ENCODE measurements at regions of chr6 and their contacts with region 1.

Region 1: DNA sequence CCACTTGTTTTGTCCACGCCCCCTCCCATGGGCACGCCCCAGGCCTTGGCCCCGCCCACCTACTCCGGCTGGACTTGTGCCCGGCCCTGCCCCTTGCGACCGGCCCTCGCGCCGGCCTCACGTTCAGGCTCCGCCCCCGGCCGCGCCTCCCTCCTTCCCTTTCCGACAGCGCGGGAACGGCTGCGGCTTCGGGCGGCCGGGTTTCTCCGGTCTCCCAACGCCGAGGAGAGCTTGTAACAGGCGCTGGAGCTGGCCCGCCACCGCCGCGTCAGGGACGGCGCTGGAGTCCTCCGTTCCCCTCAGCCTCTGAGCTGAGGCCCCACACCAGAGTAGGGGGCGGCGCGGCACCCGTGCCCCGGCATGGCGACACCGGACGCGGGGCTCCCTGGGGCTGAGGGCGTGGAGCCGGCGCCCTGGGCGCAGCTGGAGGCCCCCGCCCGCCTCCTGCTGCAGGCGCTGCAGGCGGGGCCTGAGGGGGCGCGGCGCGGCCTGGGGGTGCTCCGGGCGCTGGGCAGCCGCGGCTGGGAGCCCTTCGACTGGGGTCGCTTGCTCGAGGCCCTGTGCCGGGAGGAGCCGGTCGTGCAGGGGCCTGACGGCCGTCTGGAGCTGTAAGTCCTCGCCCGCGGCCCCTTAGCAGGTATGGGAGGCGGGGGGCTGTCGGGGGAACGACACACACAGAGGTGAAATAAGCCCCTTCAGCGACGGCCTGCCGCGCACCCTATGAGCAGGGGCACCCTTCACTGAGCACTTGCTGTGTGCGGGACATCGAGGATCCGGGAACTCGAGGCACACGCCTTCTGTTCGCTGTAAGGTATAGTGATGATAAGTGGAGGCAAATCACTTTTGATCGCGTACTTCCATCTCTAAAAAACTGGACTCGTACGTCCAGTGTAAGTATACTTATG is at the start of gene FANCE:
- DNase-seq: peak; percentile 95
- ATAC-seq: peak; percentile 79
- H3K4me3 ChIP-seq: peak within 1 kb of the TSS; percentile 79
- H3K27ac ChIP-seq: no peak within 1 kb of the TSS
- H3K4me1 ChIP-seq: peaks cover 19% of the 10 kb centered on the region
- H3K27me3 ChIP-seq: no peaks in the 10 kb centered on the region
- CTCF ChIP-seq: no peak
- total RNA-seq, gene FANCE: 13.8 and 18.6 TPM in 2 replicates

Region 2: DNA sequence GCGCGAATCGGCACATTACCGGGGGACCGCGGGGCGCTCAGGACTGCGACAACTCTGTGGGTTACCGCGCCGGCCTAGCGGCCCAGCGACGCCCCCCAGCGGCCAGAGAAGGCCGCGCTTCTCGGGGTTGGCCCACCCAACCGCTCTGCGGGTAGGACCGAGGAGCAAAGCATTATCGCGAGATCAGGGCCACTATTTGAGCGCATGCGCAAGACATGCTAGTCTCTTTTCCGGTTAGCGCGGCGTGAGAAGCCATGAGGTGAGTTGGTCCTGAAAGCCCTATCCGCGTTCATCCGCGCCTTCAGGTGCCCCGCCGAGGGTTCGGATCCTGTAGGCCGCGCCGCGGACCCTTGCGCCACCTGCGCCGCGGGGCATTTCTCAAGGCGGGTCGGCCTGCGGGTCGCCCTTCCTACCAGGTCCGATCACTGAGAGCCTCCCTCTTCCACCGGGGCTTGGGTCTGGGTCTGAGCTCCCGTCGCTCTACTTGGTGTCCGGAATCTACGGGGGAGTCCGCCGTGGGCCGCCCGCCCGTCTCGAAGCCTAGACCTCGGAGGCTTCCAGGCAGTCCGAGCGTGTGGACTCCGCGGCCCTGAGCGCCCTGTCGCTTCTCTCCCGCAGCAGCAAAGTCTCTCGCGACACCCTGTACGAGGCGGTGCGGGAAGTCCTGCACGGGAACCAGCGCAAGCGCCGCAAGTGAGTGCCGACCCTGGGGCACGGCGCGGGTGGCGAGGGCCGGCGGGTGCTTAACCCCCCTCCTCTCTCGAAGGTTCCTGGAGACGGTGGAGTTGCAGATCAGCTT is 15.9 kb after region 1 on chr6 and contains the start of gene RPL10A:
- CTCF ChIA-PET with region 1: interaction called, 5 read pairs
- POLR2A ChIA-PET with region 1: interaction called, 4 read pairs
- intact Hi-C with region 1: loop called (anchors 2 kb)
- DNase-seq: peak; percentile 98
- ATAC-seq: peak; percentile 85
- H3K4me3 ChIP-seq: peak within 1 kb of the TSS; percentile 82
- H3K27ac ChIP-seq: peak within 1 kb of the TSS; percentile 81
- H3K4me1 ChIP-seq: peaks cover 27% of the 10 kb centered on the region
- H3K27me3 ChIP-seq: no peaks in the 10 kb centered on the region
- CTCF ChIP-seq: peak; percentile 96
- total RNA-seq, gene RPL10A: 1,114 and 1,509 TPM in 2 replicates

Region 3: GRCh38 chr6:35494161-35494619 is 41.8 kb after region 1 on chr6:
- CTCF ChIA-PET with region 1: no interaction called
- POLR2A ChIA-PET with region 1: no interaction called
- intact Hi-C with region 1: no loop called
- DNase-seq: no peak
- ATAC-seq: no peak
- H3K4me3 ChIP-seq: no peak overlapping the region
- H3K27ac ChIP-seq: no peak overlapping the region
- H3K4me1 ChIP-seq: peaks cover 33% of the 10 kb centered on the region
- H3K27me3 ChIP-seq: no peaks in the 10 kb centered on the region
- CTCF ChIP-seq: no peak

Region 4: GRCh38 chr6:35512006-35512405 is 59.6 kb after region 1 on chr6:
- CTCF ChIA-PET with region 1: no interaction called
- POLR2A ChIA-PET with region 1: interaction called, 14 read pairs
- intact Hi-C with region 1: no loop called
- DNase-seq: no peak
- ATAC-seq: no peak
- H3K4me3 ChIP-seq: no peak overlapping the region
- H3K27ac ChIP-seq: no peak overlapping the region
- H3K4me1 ChIP-seq: no peaks in the 10 kb centered on the region
- H3K27me3 ChIP-seq: no peaks in the 10 kb centered on the region
- CTCF ChIP-seq: no peak

Region 5: DNA sequence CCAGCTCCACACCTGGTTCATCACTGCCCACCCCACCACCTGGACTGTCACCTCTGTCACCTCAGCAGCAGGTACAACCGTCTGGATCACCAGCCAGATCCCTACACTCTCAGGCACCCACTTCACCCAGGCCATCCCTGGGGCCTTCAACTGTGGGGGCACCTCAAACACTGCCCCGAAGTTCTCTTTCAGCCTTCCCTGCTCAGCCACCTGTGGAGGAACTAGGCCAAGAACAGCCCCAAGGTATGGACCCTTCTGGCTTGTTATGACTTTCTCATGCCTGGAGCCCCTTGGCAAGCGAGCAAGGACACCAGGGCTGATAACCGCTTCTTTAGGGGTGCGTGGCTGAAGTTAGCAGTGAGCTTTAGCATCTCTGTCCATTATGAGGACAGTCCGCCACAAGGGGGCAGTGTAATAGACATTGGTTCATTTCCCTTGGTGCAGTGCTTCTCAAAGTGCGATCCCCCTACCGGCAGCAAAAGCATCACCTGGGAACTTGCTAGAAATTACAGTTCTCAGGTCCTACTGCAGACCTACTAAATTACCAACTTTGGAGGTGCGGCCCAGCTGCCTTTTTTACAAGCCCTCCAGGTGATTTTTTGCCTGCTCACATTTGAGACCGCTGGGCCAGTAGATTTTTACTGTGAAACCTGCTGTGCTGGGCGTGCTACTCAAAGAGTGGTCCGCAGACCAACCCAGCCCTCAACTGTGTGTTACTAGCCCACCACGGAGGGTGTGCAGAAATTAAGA is 850.0 kb after region 1 on chr6:
- CTCF ChIA-PET with region 1: no interaction called
- POLR2A ChIA-PET with region 1: no interaction called
- intact Hi-C with region 1: no loop called
- DNase-seq: peak; percentile 96
- ATAC-seq: peak; percentile 99
- H3K4me3 ChIP-seq: no peak overlapping the region
- H3K27ac ChIP-seq: no peak overlapping the region
- H3K4me1 ChIP-seq: no peaks in the 10 kb centered on the region
- H3K27me3 ChIP-seq: no peaks in the 10 kb centered on the region
- CTCF ChIP-seq: peak; percentile 99

Measured in PC-3 (cell line).